Activated naive CD4-positive, alpha-beta T cell treated with anti-CD3 and anti-CD28 coated beads for 36 hours (primary cell): ENCODE measurements at regions of chr9 and their contacts with region 1.

Region 1: DNA sequence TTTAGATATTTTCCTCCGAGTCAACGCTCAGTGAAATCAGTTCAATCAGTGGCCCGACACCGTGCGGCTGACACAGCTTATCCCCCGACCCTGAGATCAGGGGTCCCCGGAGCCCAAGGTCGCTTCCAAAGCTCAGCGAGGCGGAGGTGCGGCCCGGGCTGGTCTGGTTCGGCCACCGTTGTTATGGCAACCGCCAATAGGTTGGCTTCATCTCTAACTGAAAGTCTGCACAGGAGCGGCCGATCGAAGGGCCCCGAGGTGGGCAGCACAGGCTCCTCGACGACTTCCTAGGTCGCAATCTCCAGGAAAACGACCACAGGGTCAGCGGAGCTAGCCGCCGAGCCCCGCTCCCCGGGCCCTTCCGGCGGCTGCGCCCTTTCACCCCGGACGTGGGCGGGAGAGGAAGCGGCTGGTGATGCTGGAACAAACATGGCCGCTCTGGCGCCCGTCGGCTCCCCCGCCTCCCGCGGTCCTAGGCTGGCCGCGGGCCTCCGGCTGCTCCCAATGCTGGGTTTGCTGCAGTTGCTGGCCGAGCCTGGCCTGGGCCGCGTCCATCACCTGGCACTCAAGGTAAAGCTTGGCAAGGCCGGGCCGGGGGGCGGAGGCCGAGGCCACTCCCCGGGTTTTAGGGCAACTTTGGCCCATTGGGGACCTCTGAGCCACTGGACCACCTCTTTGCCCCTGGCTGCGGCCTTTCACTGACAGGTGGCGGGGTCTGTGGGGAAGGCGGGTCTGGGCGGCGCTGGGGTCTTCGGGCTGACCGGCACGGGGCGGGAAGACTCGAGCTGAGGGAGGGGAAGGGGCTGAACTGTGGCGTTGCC is at the start of gene GPR107:
- DNase-seq: peak; percentile 88
- H3K4me3 Mint-ChIP-seq: peak within 1 kb of the TSS; percentile 92
- H3K27ac Mint-ChIP-seq: peak within 1 kb of the TSS; percentile 90
- H3K4me1 Mint-ChIP-seq: peaks cover 37% of the 10 kb centered on the region
- H3K27me3 Mint-ChIP-seq: no peaks in the 10 kb centered on the region
- total RNA-seq, gene GPR107: 19.0 to 20.0 TPM

Region 2: DNA sequence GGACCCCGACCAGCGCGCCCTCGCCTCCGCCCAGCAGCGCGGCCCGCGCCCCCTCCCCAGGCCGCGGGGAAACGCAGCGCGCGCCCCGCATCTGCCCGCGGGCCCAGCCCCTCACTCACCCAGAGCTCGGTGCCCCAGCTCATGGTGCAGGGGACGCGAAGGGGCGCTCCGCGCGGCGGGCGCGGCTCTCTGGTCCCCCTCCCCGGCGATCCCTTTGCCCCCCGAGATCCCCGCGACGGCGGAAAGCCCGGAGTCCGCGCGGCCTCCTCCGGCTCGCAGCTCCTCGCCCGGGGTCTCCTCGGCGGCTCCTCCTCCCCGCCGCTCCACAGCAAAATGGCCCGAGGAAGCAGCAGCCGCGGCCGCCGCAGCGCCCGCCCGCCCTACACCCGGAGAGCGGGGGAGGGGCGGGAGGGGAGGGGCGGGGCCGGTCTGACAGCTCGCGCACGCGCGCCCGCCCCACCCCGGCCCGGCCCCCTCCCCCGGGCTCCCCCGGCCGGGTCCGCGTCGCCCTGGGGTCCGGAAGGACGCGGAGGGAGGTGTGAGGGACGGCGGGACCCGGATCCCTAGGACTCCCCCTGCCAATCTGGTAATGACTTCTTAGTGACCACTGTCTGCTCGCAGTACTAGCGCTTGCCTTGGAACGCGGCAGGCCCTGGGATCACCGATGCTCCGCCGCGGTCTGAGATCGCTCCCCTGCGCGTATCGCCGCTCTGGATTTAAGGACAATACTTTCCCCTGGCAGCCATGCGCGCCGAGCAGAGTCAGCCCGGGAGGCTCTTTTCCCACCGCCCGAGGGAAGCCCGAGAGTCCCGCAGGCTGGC is 10.7 kb before region 1 on chr9 and contains the start of gene FNBP1:
- CTCF ChIA-PET with region 1: interaction called, 4 read pairs
- intact Hi-C with region 1: loop called (anchors 1 kb)
- DNase-seq: peak; percentile 81
- H3K4me3 Mint-ChIP-seq: peak within 1 kb of the TSS; percentile 100
- H3K27ac Mint-ChIP-seq: peak within 1 kb of the TSS; percentile 100
- H3K4me1 Mint-ChIP-seq: peaks cover 39% of the 10 kb centered on the region
- H3K27me3 Mint-ChIP-seq: no peaks in the 10 kb centered on the region
- total RNA-seq, gene FNBP1: 126 to 128 TPM

Region 3: DNA sequence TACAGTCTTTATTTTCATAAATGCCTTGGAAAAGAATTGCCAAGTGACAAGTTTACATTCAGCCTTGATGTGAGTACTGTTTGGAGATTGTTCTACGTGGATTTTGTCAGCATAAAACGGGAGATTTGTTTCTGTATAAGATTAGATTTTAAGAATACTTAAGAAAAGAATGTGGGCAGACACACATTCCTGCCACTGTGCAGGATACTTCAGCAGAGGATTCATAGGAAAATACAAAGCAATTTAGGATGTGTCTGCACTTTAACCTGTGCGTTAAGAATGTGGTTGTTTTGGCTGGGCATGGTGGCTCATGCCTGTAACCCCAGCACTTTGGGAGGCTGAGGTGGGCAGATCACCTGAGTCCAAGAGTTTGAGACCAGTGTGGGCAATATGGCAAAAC is 37.2 kb after region 1 on chr9:
- CTCF ChIA-PET with region 1: interaction called, 3 read pairs
- intact Hi-C with region 1: loop called (anchors 5 kb)
- DNase-seq: no peak
- H3K4me3 Mint-ChIP-seq: no peak overlapping the region
- H3K27ac Mint-ChIP-seq: no peak overlapping the region
- H3K4me1 Mint-ChIP-seq: peaks cover 2% of the 10 kb centered on the region
- H3K27me3 Mint-ChIP-seq: no peaks in the 10 kb centered on the region